Natural killer cell (primary cell): ENCODE measurements at regions of chr17 and their contacts with region 1.

Region 1: DNA sequence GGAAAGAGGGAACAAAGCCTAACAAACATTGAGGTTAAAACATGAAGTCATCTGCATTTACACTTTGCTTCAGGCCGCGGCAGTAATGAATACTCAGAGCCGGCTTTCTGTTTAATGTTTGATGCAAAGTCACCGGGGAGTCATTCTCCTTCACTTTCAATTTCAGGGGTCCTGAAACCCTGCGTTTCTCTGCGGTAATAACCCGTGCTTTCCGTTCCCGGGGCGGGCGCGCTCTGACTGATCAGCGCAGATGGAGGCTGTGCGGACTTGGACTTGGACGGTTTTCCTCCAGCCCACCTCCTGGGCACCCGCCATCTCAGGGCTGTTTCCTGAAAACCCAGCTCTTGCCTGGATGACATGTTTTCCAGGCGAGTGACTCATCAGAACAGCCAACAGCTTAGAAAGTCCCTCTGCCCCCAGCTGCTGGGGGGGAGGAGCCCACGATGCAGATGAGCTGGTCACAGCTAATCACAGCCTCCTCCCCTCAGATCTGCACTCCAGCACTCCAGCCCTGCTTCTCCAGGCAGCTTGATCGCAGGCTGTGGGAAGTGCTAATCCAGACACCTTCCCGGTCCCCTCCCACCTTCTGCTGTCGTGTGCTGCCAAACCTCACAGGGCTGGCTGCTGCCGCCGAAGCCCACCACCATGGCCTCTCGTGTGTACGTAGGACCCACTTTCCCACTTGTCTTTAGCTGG is 158.6 kb upstream of the CHMP6 start:
- DNase-seq: peak; percentile 76 to 84
- ATAC-seq: peak; percentile 89 to 94 (median 91)
- H3K4me3 ChIP-seq: peak overlapping the region; percentile 52
- H3K4me3 Mint-ChIP-seq: peak overlapping the region; percentile 90
- H3K27ac ChIP-seq: peak overlapping the region; percentile 83
- H3K27ac Mint-ChIP-seq: peak overlapping the region; percentile 95 to 98
- H3K4me1 ChIP-seq: peaks cover 16% of the 10 kb centered on the region
- H3K4me1 Mint-ChIP-seq: peaks cover 19 to 31% of the 10 kb centered on the region in 2 donors
- H3K27me3 ChIP-seq: no peaks in the 10 kb centered on the region
- H3K27me3 Mint-ChIP-seq: no peaks in the 10 kb centered on the region
- CTCF ChIP-seq: no peak

Region 2: DNA sequence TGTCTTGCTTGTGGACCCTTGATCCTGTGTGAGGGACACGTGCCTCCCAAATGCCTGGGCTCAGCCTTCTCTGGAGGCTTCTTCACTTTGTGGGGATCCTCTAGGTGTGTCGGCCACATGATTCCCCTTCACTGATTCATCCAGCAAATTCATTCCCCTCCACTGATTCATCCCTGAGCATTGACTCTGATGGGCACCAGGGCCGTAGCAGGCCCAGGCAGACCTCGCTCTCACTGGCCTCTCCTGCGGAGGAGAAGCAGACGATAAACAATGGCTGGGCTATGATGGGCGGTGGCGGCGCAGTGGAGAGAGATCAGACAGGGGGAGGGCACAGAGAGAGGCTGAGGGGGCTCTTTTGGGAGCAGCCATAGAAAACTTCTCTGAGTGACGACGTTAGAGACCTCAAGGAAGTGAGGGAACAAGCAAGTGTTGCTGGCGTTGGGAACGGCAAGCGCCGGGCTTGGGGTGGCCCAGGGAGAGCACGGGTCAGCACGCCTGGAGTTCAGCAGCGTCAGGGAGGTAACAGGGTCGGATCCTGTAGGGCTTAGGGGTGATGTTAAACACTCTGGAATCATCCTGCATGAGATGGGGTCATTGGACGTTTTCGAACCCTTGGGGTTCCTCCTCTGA is 305.9 kb before region 1 on chr17:
- intact Hi-C with region 1: no loop called
- DNase-seq: no peak
- ATAC-seq: no peak
- H3K4me3 ChIP-seq: no peak overlapping the region
- H3K4me3 Mint-ChIP-seq: no peak overlapping the region
- H3K27ac ChIP-seq: no peak overlapping the region
- H3K27ac Mint-ChIP-seq: no peak overlapping the region
- H3K4me1 ChIP-seq: no peaks in the 10 kb centered on the region
- H3K4me1 Mint-ChIP-seq: no peaks in the 10 kb centered on the region
- H3K27me3 ChIP-seq: no peaks in the 10 kb centered on the region
- H3K27me3 Mint-ChIP-seq: peaks cover 10 to 12% of the 10 kb centered on the region in 2 donors
- CTCF ChIP-seq: no peak

Region 3: GRCh38 chr17:80789356-80789902 is 43.6 kb before region 1 on chr17:
- intact Hi-C with region 1: no loop called
- DNase-seq: peak in 1 of 2 donors; percentile 36
- ATAC-seq: no peak
- H3K4me3 ChIP-seq: no peak overlapping the region
- H3K4me3 Mint-ChIP-seq: peak overlapping the region; percentile 36
- H3K27ac ChIP-seq: peak overlapping the region; percentile 41
- H3K27ac Mint-ChIP-seq: peak overlapping the region; percentile 43 to 85
- H3K4me1 ChIP-seq: peaks cover 24% of the 10 kb centered on the region
- H3K4me1 Mint-ChIP-seq: peaks cover 26 to 40% of the 10 kb centered on the region in 2 donors
- H3K27me3 ChIP-seq: no peaks in the 10 kb centered on the region
- H3K27me3 Mint-ChIP-seq: no peaks in the 10 kb centered on the region
- CTCF ChIP-seq: no peak

Region 4: DNA sequence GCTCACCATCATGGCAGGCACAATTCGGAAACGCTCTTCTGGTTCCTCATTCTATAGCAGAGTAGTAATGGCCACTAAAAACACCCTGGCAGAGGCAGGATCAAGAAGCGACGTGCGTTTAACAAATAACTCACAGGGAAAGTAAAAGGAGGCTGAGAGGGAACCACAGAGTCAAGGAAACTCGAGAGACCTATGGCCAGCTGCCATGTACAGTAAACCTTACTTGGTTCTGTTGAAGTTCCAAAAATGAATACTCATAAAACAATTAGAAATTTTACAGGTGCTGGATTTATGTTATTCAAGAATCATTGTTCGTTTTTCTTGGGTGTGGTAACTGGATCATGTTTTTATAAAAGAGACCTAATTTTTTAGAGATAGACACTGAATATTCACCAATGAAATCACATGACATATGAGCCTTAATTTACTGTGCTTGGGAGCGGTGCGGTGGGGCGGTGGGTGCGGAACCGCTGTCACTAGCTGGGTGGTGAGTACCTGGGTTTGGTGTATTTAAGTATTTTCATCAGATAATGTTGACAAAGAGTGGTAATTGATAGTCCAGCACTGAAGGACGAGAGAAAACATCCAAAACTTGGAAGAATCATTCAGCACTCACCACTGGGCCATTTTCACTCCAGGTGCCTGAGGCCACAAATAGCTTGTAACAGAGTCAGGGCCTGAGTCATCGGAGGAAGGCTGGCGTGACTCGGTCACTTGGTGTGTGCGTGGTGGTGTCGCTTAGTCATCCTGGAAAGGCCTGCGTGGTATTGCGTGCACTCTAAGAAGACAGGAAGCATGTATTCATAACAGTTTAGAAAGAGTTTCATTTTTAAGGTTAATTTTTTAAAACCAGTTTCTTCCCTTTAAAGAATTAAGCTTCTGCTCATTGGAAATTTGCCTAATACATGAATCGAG is 23.2 kb after region 1 on chr17:
- intact Hi-C with region 1: loop called (anchors 1 kb)
- DNase-seq: peak; percentile 71 to 80
- ATAC-seq: peak; percentile 93 to 98 (median 98)
- H3K4me3 ChIP-seq: no peak overlapping the region
- H3K4me3 Mint-ChIP-seq: no peak overlapping the region
- H3K27ac ChIP-seq: peak overlapping the region; percentile 34
- H3K27ac Mint-ChIP-seq: peak overlapping the region; percentile 80 to 88
- H3K4me1 ChIP-seq: peaks cover 18% of the 10 kb centered on the region
- H3K4me1 Mint-ChIP-seq: peaks cover 20 to 32% of the 10 kb centered on the region in 2 donors
- H3K27me3 ChIP-seq: no peaks in the 10 kb centered on the region
- H3K27me3 Mint-ChIP-seq: no peaks in the 10 kb centered on the region
- CTCF ChIP-seq: no peak